ENCODE measurements at regions of chr3 and their contacts with region 1.

Region 1: GRCh38 chr3:99499235-99500158 is 138.9 kb upstream of the COL8A1 start:
- DNase-seq: peak in 1 of 2 donors; percentile 44
- ATAC-seq: peak; percentile 44 to 78 (median 66)
- H3K4me3 ChIP-seq: no peak overlapping the region
- H3K27ac ChIP-seq: peak overlapping the region in 4 of 10 donors; percentile 15 to 60 (median 33)
- H3K4me1 ChIP-seq: peaks cover 4 to 45% (median 36%) of the 10 kb centered on the region in 9 donors
- H3K27me3 ChIP-seq: no peaks in the 10 kb centered on the region
- CTCF ChIP-seq: peak; percentile 51 to 84 (median 77)

Region 2: GRCh38 chr3:99023590-99024192 is 475.8 kb before region 1 on chr3:
- intact Hi-C with region 1: loop called in 1 of 10 experiments (anchors 10 kb)
- DNase-seq: no peak
- ATAC-seq: no peak
- H3K4me3 ChIP-seq: no peak overlapping the region
- H3K27ac ChIP-seq: no peak overlapping the region
- H3K4me1 ChIP-seq: no peaks in the 10 kb centered on the region
- H3K27me3 ChIP-seq: no peaks in the 10 kb centered on the region
- CTCF ChIP-seq: peak; percentile 29 to 77 (median 66)

Region 3: DNA sequence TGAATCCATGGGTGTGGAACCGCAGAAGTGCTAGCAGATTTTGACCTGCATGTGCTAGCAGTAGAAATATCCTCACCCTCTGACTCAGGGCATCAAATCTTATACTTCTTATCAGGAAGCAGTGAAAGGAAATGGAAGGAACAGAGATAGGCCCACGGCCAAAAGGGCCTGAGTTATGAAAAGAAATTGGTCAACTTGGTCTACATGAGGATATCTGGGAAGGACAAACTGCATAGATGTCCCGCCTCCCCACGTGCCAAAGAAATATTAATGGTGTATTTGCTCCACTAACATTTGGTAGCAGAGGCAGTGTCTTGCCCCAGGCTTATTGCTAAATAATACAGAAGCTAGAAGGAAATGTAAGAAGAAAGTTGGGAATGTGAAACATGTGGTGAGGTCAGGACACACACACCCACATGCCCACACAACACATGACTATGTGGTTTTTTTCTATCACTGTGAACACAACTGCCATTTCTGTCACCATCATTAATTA is 45.3 kb after region 1 on chr3:
- intact Hi-C with region 1: loop called in 3 of 10 experiments (anchors 5 kb)
- DNase-seq: peak in 1 of 2 donors; percentile 47
- ATAC-seq: peak in 7 of 8 donors; percentile 59 to 77 (median 72)
- H3K4me3 ChIP-seq: no peak overlapping the region
- H3K27ac ChIP-seq: peak overlapping the region; percentile 11 to 78 (median 68)
- H3K4me1 ChIP-seq: peaks cover 3 to 73% (median 43%) of the 10 kb centered on the region in 9 donors
- H3K27me3 ChIP-seq: no peaks in the 10 kb centered on the region
- CTCF ChIP-seq: no peak

Region 4: GRCh38 chr3:99638167-99638948 is 138.9 kb after region 1 on chr3 and contains the start of gene COL8A1:
- intact Hi-C with region 1: loop called in 1 of 10 experiments (anchors 5 kb)
- DNase-seq: peak; percentile 62 to 64
- ATAC-seq: peak; percentile 71 to 91 (median 86)
- H3K4me3 ChIP-seq: peak within 1 kb of the TSS; percentile 37 to 68 (median 58)
- H3K27ac ChIP-seq: peak within 1 kb of the TSS; percentile 59 to 91 (median 84)
- H3K4me1 ChIP-seq: peaks cover 0 to 30% (median 15%) of the 10 kb centered on the region in 9 donors
- H3K27me3 ChIP-seq: peaks cover 0 to 60% (median 27%) of the 10 kb centered on the region in 7 donors
- CTCF ChIP-seq: no peak
- total RNA-seq, gene COL8A1: 7.5 to 32.2 (median 15.1) TPM

Region 5: DNA sequence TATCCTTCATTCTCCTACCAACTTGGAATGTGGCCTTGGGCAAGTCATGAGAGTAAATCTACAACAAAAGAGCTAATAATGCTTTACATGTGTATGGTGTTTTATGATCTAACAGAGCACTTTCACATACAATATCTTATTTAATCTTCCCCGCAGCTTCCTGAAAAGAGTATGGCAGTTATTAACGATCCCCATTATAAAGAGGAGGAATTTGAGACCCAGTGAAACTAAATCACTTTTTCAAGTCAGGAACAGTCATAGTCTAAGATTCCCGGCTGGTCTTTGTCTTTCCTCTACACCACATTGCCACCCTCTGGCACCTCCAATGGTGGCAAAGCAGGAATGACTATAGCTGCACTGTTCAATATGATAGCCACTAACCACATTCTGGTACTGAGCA is 248.4 kb after region 1 on chr3:
- intact Hi-C with region 1: loop called in 7 of 10 experiments (anchors 1 to 10 kb)
- DNase-seq: no peak
- ATAC-seq: peak in 2 of 8 donors; percentile 46 to 63
- H3K4me3 ChIP-seq: no peak overlapping the region
- H3K27ac ChIP-seq: no peak overlapping the region
- H3K4me1 ChIP-seq: peaks cover 0 to 4% (median 0%) of the 10 kb centered on the region in 9 donors
- H3K27me3 ChIP-seq: no peaks in the 10 kb centered on the region
- CTCF ChIP-seq: peak in 6 of 9 donors; percentile 10 to 44 (median 29)

Region 6: DNA sequence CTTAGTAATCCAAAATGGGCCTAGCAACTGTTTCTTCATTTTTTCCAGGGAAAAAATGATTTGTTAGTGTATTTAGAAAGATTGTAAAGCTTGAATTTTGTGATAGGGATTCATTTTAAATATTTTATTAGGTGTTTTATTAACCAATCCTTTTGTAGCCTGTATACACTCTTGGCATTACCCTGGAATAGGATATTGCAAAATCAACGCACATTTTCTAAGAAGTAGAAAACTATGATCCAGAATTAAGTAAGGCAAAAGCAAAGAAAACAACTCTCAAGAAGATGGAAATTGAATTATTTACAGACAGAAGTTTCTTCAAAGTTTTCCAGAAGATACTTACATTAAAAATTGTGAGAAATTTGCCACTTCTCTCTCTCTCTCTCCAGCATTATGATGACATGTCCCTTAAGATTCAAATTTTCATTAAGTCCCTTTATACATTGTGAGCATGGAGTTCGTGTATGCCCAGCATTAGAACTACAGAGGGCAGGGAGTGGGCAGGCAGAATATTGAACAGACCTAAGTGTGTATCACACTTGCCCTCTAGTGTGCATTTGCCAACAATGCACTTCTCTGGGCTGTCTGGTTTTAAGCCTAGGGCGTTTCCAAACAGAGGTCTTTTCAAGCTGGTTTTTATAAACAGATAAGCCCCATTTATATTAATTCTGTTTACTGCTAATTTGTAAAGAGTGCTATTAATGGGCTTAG is 289.7 kb after region 1 on chr3:
- intact Hi-C with region 1: loop called in 2 of 10 experiments (anchors 10 kb)
- DNase-seq: peak in 1 of 2 donors; percentile 30
- ATAC-seq: peak; percentile 73 to 94 (median 88)
- H3K4me3 ChIP-seq: no peak overlapping the region
- H3K27ac ChIP-seq: no peak overlapping the region
- H3K4me1 ChIP-seq: peaks cover 0 to 5% (median 0%) of the 10 kb centered on the region in 9 donors
- H3K27me3 ChIP-seq: no peaks in the 10 kb centered on the region
- CTCF ChIP-seq: peak; percentile 25 to 72 (median 65)

Region 7: GRCh38 chr3:100697172-100697571 is 1197.7 kb after region 1 on chr3:
- intact Hi-C with region 1: no loop called
- DNase-seq: no peak
- ATAC-seq: no peak
- H3K4me3 ChIP-seq: no peak overlapping the region
- H3K27ac ChIP-seq: no peak overlapping the region
- H3K4me1 ChIP-seq: no peaks in the 10 kb centered on the region
- H3K27me3 ChIP-seq: peaks cover 0 to 50% (median 37%) of the 10 kb centered on the region in 7 donors
- CTCF ChIP-seq: no peak